PC-9 (cell line): ENCODE measurements at regions of chr14 and their contacts with region 1.

Region 1: DNA sequence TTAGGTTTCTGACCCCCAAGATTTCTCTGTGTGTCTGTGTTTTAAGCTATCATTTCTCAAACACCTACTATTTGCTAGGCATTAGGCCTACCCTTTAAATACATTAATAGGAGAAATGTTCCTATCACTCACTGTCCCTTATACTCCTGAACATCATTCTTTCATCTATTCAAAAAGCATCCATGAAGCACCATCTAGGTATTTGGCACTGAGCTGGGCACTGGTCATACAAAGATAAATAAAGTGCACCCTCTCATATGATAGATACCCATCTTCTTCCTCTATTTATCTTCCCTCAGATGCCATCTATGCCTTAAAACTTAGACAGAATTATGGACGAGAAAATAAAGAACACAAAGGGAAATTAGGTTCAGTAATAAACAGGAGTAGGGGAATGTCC is 20.4 kb downstream of the SIX1 start:
- DNase-seq: no peak
- H3K4me3 ChIP-seq: no peak overlapping the region
- H3K27ac ChIP-seq: no peak overlapping the region
- H3K4me1 ChIP-seq: no peaks in the 10 kb centered on the region
- H3K27me3 ChIP-seq: no peaks in the 10 kb centered on the region
- CTCF ChIP-seq: no peak

Region 2: DNA sequence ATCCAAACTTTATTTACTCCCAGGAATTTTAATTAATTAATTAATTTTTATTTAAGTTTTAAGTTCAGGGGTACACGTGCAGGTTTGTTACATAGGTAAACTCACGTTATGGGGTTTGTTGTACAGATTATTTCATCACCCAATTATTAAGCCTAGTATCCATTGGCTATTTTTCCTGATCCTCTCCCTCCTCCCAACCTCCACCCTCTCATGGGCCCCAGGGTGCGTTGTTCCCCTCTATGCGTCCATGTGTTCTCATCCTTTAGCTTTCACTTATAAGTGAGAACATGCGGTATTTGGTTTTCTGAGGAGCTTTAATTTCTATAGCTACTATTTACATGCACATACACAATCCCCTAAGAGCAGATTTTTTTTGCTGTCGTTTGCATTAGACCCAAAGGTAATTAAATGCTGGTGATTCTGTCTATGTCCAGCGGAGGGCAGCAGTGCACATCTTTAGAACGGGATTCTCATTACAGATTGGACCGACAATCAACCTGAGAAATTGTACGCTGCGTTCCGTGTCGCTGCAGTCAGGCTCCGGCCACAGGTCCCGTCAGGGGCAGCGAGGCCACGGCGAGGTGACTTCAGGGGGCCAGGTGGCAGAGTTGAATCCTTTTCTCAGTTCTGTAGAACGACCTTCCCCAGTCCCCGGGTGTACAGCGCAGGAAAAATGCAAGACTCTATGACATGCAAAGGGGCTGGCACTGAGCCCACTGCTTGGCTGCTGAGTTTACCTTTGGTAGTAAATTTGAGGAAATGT is 640.6 kb after region 1 on chr14:
- CTCF ChIA-PET with region 1: no interaction called
- POLR2A ChIA-PET with region 1: no interaction called
- intact Hi-C with region 1: loop called (anchors 5 kb)
- DNase-seq: peak; percentile 71 to 80
- H3K4me3 ChIP-seq: peak overlapping the region; percentile 58
- H3K27ac ChIP-seq: no peak overlapping the region
- H3K4me1 ChIP-seq: no peaks in the 10 kb centered on the region
- H3K27me3 ChIP-seq: no peaks in the 10 kb centered on the region
- CTCF ChIP-seq: peak; percentile 92